ENCODE measurements at regions of chr9 and their contacts with region 1.

Region 1: GRCh38 chr9:35116898-35117551 is 1.4 kb upstream of the ATOSB start:
- DNase-seq: peak; percentile 96
- H3K4me3 Mint-ChIP-seq: peak overlapping the region; percentile 91
- H3K27ac Mint-ChIP-seq: peak overlapping the region; percentile 94
- H3K4me1 Mint-ChIP-seq: peaks cover 37% of the 10 kb centered on the region
- H3K27me3 Mint-ChIP-seq: peaks cover 2% of the 10 kb centered on the region

Region 2: DNA sequence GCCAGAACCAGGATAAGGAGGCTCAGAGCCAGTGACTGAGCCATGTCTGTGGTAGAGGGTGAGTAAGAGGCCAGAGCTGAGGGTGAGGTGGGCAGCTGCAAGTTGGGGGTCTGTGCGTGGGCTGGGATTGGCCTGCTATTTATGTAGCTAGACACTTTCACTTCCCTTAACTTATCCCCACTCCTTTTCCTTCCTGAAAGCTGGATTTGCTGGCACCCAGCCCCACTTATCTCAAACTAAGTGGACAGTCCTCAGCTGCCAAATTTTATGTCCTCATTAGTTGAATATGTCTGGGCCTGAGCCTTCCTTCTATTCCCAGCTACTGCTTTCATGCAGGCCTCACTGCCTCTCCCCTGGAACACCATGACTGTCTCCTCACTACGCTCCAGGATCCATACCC is 407.0 kb before region 1 on chr9 and contains the start of gene CCL21:
- intact Hi-C with region 1: no loop called
- DNase-seq: no peak
- H3K4me3 Mint-ChIP-seq: no peak within 1 kb of the TSS
- H3K27ac Mint-ChIP-seq: no peak within 1 kb of the TSS
- H3K4me1 Mint-ChIP-seq: no peaks in the 10 kb centered on the region
- H3K27me3 Mint-ChIP-seq: peaks cover 26% of the 10 kb centered on the region
- total RNA-seq, gene CCL21: not detected in 2 replicates

Region 3: DNA sequence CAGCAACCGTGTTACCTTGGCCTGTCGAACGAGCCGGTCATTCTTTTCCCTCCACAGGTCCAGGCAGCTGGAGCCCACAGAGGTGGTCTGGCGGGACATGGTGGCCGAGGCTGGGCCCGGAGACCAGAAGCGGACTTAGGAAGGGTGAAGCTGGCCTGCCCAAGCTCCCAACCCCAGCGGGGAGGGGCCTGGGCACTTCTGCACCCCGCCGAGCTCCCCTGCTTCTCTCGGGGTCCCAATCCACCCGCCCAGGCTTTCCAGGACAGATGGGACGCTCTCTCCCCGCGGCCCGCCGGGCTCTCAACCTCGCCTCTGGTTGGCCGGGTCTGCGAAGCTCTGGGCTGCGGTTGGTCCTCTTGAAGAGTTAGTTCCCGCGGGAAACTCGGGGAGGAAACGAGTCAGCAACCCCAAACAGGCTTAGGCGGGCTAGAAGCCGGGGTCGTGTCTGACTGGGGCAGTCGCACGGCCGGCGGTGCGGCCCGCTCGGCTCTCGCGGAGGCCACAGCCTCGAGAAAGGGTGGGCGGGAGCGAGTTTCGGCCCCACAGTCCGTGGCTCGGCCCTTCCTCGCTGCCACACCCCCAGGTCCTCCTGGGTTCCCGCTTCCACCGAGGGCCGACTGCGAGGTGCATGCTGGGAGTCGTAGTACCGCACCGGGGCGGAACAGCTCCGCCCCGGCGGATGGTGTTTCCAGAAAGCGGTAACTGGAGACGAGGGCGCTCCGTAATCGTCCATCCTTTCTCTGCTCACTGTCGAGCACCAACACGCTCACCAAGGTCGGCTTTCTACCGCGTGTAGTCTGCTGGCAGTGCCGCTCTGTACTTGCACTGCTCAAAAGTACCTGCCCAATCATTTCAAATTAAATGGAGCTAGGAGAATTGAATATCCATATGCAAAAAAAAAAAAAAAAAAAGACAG is 37.3 kb before region 1 on chr9 and contains the start of gene FANCG:
- intact Hi-C with region 1: loop called (anchors 1 kb)
- DNase-seq: peak; percentile 96
- H3K4me3 Mint-ChIP-seq: peak within 1 kb of the TSS; percentile 99
- H3K27ac Mint-ChIP-seq: peak within 1 kb of the TSS; percentile 100
- H3K4me1 Mint-ChIP-seq: peaks cover 30% of the 10 kb centered on the region
- H3K27me3 Mint-ChIP-seq: no peaks in the 10 kb centered on the region
- total RNA-seq, gene FANCG: 114 and 122 TPM in 2 replicates

Region 4: DNA sequence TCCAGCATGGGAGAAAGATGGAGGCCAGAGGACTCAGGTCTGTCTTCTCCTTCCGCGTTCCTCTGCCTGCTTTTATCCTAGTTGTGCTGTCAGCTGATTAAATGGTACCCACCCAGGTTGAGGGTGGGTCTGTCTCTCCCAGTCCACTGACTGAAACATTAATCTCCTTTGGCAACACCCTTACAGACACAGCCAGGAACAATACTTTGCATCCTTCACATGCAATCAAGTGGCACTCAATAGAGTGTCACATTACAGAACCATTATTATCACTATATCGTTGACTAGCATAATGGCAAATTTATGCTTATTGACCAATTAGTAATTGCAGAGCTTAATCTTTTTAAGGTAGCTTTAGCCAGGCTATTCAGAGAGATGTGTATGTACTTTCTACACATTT is 109.6 kb after region 1 on chr9:
- intact Hi-C with region 1: no loop called
- DNase-seq: no peak
- H3K4me3 Mint-ChIP-seq: no peak overlapping the region
- H3K27ac Mint-ChIP-seq: no peak overlapping the region
- H3K4me1 Mint-ChIP-seq: no peaks in the 10 kb centered on the region
- H3K27me3 Mint-ChIP-seq: peaks cover 1% of the 10 kb centered on the region

Region 5: DNA sequence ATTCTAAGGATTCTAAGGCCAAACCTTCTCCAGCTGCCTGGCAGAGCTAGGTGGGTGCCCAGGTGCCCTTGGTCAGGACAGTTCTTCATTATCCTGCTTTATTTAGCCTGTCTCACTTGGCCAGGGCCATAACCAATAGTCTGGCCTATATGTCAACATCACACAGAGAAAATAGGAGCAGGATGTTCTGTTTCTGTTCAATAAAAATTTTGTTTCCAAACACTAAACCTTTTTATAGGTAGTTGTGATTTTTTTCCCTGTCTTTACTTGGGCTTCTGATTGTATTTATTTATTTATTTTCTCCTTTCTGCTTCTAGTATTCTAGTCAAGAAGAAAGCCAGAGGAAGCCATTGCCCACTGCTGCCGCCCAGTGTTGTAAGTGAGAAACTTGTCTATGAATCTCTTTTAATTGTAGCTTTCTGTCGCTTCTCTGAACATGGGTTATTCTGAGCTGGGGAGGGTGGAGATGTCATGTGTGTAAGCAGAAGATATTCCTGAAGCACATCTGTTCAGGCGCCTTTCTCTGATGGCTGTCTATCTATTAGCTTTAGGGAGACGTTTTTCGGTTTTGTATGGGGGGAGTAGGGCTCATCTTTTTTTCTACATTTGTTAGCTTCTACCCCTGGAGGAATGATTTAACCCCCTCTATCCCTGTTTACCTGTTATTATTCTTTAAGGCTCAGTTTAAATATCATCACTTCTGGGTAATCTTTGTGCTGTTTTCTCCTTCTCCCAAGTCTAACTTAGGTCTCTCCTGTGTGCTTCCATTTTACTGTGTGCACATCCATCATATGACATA is 141.8 kb after region 1 on chr9:
- intact Hi-C with region 1: loop called (anchors 1 kb)
- DNase-seq: peak; percentile 78
- H3K4me3 Mint-ChIP-seq: no peak overlapping the region
- H3K27ac Mint-ChIP-seq: no peak overlapping the region
- H3K4me1 Mint-ChIP-seq: no peaks in the 10 kb centered on the region
- H3K27me3 Mint-ChIP-seq: peaks cover 10% of the 10 kb centered on the region

Region 6: DNA sequence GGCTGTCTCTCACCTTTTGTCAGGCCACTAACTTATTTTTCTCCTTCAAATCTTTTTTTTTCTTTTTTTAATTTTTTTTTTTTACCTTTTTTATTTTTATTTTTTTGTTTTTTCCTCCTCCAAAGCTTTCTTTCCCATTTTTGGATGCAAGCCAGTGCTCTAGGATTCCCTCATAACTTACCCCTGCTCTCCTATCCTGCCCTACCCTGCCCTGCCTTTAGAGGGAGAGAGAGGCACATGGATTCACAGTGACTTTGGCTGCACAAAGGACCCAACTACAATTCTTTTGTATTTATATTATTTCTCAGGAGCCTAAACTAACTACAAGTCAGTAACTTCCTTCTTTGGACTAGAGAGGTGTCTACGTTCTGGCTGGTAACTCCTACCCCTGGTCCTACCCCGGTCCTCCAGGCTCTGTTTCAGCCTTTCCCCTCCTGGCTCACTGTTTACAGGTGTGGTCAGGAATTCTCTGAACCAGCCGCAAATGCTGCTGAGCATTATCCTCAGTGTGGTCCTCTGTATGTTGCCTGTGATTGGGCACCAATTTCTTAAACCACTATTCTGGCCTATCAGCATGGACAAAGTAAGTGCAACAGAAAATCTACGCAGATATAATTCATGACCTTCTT is 364.4 kb after region 1 on chr9:
- intact Hi-C with region 1: loop called (anchors 1 kb)
- DNase-seq: peak; percentile 76
- H3K4me3 Mint-ChIP-seq: no peak overlapping the region
- H3K27ac Mint-ChIP-seq: no peak overlapping the region
- H3K4me1 Mint-ChIP-seq: no peaks in the 10 kb centered on the region
- H3K27me3 Mint-ChIP-seq: peaks cover 6% of the 10 kb centered on the region

Region 7: GRCh38 chr9:35553670-35554543 is 436.9 kb after region 1 on chr9:
- intact Hi-C with region 1: loop called (anchors 1 kb)
- DNase-seq: peak; percentile 83
- H3K4me3 Mint-ChIP-seq: no peak overlapping the region
- H3K27ac Mint-ChIP-seq: no peak overlapping the region
- H3K4me1 Mint-ChIP-seq: no peaks in the 10 kb centered on the region
- H3K27me3 Mint-ChIP-seq: no peaks in the 10 kb centered on the region